IMR-90 (cell line): ENCODE measurements at regions of chr6 and their contacts with region 1.

Region 1: GRCh38 chr6:14743465-14744211 is 502.2 kb upstream of the JARID2 start:
- DNase-seq: peak; percentile 100
- ATAC-seq: peak; percentile 90
- H3K4me3 ChIP-seq: no peak overlapping the region; the same call in 1 of the 2 replicates
- H3K27ac ChIP-seq: peak overlapping the region; percentile 85
- H3K4me1 ChIP-seq: peaks cover 13% of the 10 kb centered on the region
- H3K27me3 ChIP-seq: no peaks in the 10 kb centered on the region
- CTCF ChIP-seq: no peak
- POLR2A ChIP-seq: peak; percentile 46
- RAD21 ChIP-seq: peak; percentile 38

Region 2: GRCh38 chr6:14286144-14286543 is 457.5 kb before region 1 on chr6:
- CTCF ChIA-PET with region 1: no interaction called
- POLR2A ChIA-PET with region 1: no interaction called
- dilution Hi-C with region 1: no loop called
- in situ Hi-C with region 1: no loop called
- intact Hi-C with region 1: no loop called
- DNase-seq: peak; percentile 90
- ATAC-seq: peak; percentile 62
- H3K4me3 ChIP-seq: no peak overlapping the region
- H3K27ac ChIP-seq: no peak overlapping the region
- H3K4me1 ChIP-seq: peaks cover 3% of the 10 kb centered on the region
- H3K27me3 ChIP-seq: peaks cover 5% of the 10 kb centered on the region; the same call in 1 of the 2 replicates
- CTCF ChIP-seq: no peak
- POLR2A ChIP-seq: no peak
- RAD21 ChIP-seq: no peak

Region 3: GRCh38 chr6:14841901-14842421 is 98.3 kb after region 1 on chr6:
- CTCF ChIA-PET with region 1: no interaction called
- POLR2A ChIA-PET with region 1: no interaction called
- dilution Hi-C with region 1: no loop called
- in situ Hi-C with region 1: no loop called
- intact Hi-C with region 1: loop called (anchors 5 kb)
- DNase-seq: peak; percentile 100
- ATAC-seq: peak; percentile 91
- H3K4me3 ChIP-seq: no peak overlapping the region
- H3K27ac ChIP-seq: peak overlapping the region; percentile 59; the same call in 1 of the 2 replicates
- H3K4me1 ChIP-seq: peaks cover 7% of the 10 kb centered on the region
- H3K27me3 ChIP-seq: no peaks in the 10 kb centered on the region
- CTCF ChIP-seq: no peak
- POLR2A ChIP-seq: no peak
- RAD21 ChIP-seq: peak; percentile 12